Activated CD4-positive, alpha-beta T cell treated with anti-CD3 and anti-CD28 coated beads, Interleukin-2, amount 10 ng/mL, durations not matched to agents 7 days and 5 days (primary cell): ENCODE measurements at regions of chr2 and their contacts with region 1.

Region 1: GRCh38 chr2:38581193-38582147 is 21.3 kb downstream of the HNRNPLL start:
- DNase-seq: peak; percentile 58
- H3K4me3 Mint-ChIP-seq: no peak overlapping the region
- H3K27ac Mint-ChIP-seq: no peak overlapping the region
- H3K4me1 Mint-ChIP-seq: peaks cover 21% of the 10 kb centered on the region
- H3K27me3 Mint-ChIP-seq: no peaks in the 10 kb centered on the region

Region 2: GRCh38 chr2:38561691-38562090 is 19.8 kb before region 1 on chr2:
- CTCF ChIA-PET with region 1: interaction called, 11 read pairs
- POLR2A ChIA-PET with region 1: no interaction called
- DNase-seq: no peak
- H3K4me3 Mint-ChIP-seq: no peak overlapping the region
- H3K27ac Mint-ChIP-seq: no peak overlapping the region
- H3K4me1 Mint-ChIP-seq: no peaks in the 10 kb centered on the region
- H3K27me3 Mint-ChIP-seq: no peaks in the 10 kb centered on the region

Region 3: GRCh38 chr2:38568724-38569436 is 12.6 kb before region 1 on chr2:
- CTCF ChIA-PET with region 1: interaction called, 12 read pairs
- POLR2A ChIA-PET with region 1: no interaction called
- DNase-seq: no peak
- H3K4me3 Mint-ChIP-seq: no peak overlapping the region
- H3K27ac Mint-ChIP-seq: no peak overlapping the region
- H3K4me1 Mint-ChIP-seq: peaks cover 9% of the 10 kb centered on the region
- H3K27me3 Mint-ChIP-seq: no peaks in the 10 kb centered on the region

Region 4: GRCh38 chr2:38596229-38596628 is 14.8 kb after region 1 on chr2:
- CTCF ChIA-PET with region 1: interaction called, 18 read pairs
- POLR2A ChIA-PET with region 1: interaction called, 3 read pairs
- DNase-seq: no peak
- H3K4me3 Mint-ChIP-seq: no peak overlapping the region
- H3K27ac Mint-ChIP-seq: peak overlapping the region; percentile 60
- H3K4me1 Mint-ChIP-seq: peaks cover 74% of the 10 kb centered on the region
- H3K27me3 Mint-ChIP-seq: no peaks in the 10 kb centered on the region

Region 5: GRCh38 chr2:38709567-38710194 is 128.2 kb after region 1 on chr2:
- CTCF ChIA-PET with region 1: interaction called, 14 read pairs
- POLR2A ChIA-PET with region 1: no interaction called
- DNase-seq: peak; percentile 64
- H3K4me3 Mint-ChIP-seq: peak overlapping the region; percentile 52
- H3K27ac Mint-ChIP-seq: peak overlapping the region; percentile 89
- H3K4me1 Mint-ChIP-seq: peaks cover 58% of the 10 kb centered on the region
- H3K27me3 Mint-ChIP-seq: no peaks in the 10 kb centered on the region

Region 6: GRCh38 chr2:38722271-38723061 is 141.0 kb after region 1 on chr2:
- CTCF ChIA-PET with region 1: interaction called, 15 read pairs
- POLR2A ChIA-PET with region 1: no interaction called
- DNase-seq: peak; percentile 27
- H3K4me3 Mint-ChIP-seq: peak overlapping the region; percentile 7
- H3K27ac Mint-ChIP-seq: peak overlapping the region; percentile 79
- H3K4me1 Mint-ChIP-seq: peaks cover 45% of the 10 kb centered on the region
- H3K27me3 Mint-ChIP-seq: no peaks in the 10 kb centered on the region

Region 7: DNA sequence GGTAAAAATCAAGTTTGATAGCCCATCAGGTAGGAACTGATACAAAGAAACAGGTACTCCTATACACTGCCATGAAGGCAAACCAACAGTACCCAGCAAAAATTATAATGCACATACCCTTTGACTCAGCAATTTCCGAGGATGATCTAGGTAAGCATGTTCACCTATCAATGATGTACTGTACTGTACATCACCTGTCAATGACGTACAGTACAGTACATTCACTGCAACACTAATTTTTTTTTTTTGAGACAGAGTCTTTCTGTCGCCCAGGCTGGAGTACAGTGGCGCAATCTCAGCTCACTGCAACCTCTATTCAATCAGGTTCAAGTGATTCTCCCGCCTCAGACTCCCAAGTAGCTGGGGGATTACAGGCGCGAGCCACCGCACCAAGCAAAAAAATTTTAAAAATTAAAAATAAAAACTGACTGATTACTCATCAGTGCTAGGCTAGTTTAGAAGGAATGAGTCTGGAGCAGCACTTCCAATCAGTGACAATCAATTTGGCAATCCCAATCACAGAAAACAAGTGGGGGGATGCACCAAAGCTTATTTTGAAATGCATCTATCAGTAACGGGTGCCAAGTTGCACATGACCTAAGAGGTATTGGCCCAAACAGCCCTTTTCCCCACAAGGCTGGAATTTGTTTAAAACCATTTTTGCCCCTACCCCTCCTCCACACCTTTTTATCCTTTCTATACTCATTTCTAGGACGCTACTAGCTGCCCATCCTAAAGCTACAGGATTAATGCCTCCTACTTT is 161.5 kb after region 1 on chr2:
- CTCF ChIA-PET with region 1: interaction called, 11 read pairs
- POLR2A ChIA-PET with region 1: interaction called, 3 read pairs
- DNase-seq: no peak
- H3K4me3 Mint-ChIP-seq: no peak overlapping the region
- H3K27ac Mint-ChIP-seq: no peak overlapping the region
- H3K4me1 Mint-ChIP-seq: peaks cover 63% of the 10 kb centered on the region
- H3K27me3 Mint-ChIP-seq: no peaks in the 10 kb centered on the region